Endothelial cell of umbilical vein (primary cell): ENCODE measurements at regions of chr3 and their contacts with region 1.

Region 1: GRCh38 chr3:141959921-141960554 is 83.6 kb downstream of the ATP1B3 start:
- DNase-seq: no peak
- H3K4me3 ChIP-seq: no peak overlapping the region
- H3K27ac ChIP-seq: no peak overlapping the region
- H3K4me1 ChIP-seq: no peaks in the 10 kb centered on the region
- H3K27me3 ChIP-seq: no peaks in the 10 kb centered on the region
- CTCF ChIP-seq: no peak
- POLR2A ChIP-seq: no peak

Region 2: DNA sequence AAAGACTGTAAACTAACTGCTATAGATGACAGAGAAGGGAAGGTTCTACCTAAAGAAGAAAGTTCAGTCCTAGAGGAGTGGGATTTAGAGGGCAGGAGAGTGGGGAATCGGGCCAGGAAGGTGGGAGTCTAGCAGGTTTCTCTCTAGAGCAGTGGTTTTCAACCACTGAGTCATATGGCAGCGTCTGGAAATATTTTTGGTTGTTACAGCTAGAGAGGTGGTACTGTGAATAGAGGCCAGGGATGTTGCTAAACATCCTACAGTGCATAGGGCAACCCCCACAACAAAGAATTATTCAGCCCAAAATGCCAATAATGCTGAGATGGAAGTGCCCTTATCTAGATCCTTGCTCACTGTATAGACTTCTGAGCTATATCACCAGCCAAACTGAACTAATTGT is 54.9 kb before region 1 on chr3:
- CTCF ChIA-PET with region 1: no interaction called
- POLR2A ChIA-PET with region 1: no interaction called
- dilution Hi-C with region 1: no loop called
- intact Hi-C with region 1: no loop called
- DNase-seq: no peak
- H3K4me3 ChIP-seq: no peak overlapping the region
- H3K27ac ChIP-seq: no peak overlapping the region
- H3K4me1 ChIP-seq: no peaks in the 10 kb centered on the region
- H3K27me3 ChIP-seq: no peaks in the 10 kb centered on the region
- CTCF ChIP-seq: no peak
- POLR2A ChIP-seq: no peak

Region 3: GRCh38 chr3:141998669-141999290 is 38.7 kb after region 1 on chr3:
- CTCF ChIA-PET with region 1: interaction called, 4 read pairs
- POLR2A ChIA-PET with region 1: no interaction called
- dilution Hi-C with region 1: no loop called
- intact Hi-C with region 1: loop called (anchors 1 kb)
- DNase-seq: peak; percentile 19
- H3K4me3 ChIP-seq: no peak overlapping the region
- H3K27ac ChIP-seq: no peak overlapping the region
- H3K4me1 ChIP-seq: no peaks in the 10 kb centered on the region
- H3K27me3 ChIP-seq: no peaks in the 10 kb centered on the region
- CTCF ChIP-seq: peak in 1 of 2 donors; percentile 8
- POLR2A ChIP-seq: no peak

Region 4: DNA sequence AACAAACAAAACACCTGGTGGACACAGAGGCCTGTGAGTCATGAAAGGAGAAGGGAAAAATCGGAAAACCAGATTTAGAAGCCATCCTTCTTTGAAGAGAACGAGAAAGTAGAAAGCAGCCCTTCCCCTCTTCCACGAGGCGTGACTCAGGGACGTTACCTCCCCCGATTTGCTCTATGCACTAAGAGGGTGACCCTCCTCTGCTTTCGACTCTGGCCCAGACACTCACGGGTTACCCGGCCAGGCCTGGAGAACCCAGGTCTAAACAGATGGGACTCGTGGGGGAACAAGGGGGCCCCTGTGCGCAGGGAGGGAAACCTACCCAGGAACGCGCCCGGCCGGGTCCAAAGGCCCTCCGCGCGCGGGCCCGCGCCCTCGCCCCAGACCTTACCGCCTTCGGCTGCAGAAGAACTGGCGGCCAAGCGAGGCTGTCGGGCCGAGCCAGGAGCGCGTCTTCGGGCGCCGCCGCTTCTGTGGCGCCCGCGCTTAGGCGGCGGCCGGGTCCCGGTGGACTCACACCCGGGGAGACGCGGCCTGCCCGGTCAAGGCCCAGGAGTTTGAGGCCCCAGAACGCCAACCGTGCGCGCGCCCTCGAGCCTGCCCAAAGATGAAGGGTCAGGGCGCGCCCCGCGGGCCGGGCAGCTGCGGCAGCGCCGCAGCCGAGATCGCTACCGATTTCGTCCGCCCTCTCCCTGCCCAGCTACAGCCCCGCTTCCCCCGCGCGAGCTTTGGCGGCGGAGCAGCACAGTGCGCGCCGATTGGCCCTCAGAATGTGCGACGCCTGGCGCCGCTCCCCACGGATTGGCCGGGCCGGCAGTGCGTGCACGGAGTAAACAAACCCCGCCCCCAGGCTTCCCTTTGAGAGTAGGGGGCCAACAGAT is 189.0 kb after region 1 on chr3 and contains the start of gene TFDP2:
- CTCF ChIA-PET with region 1: no interaction called
- POLR2A ChIA-PET with region 1: no interaction called
- dilution Hi-C with region 1: no loop called
- intact Hi-C with region 1: loop called (anchors 1 kb)
- DNase-seq: peak; percentile 92
- H3K4me3 ChIP-seq: peak within 1 kb of the TSS; percentile 24 to 75 (median 51)
- H3K27ac ChIP-seq: peak within 1 kb of the TSS; percentile 28
- H3K4me1 ChIP-seq: peaks cover 13% of the 10 kb centered on the region
- H3K27me3 ChIP-seq: peaks cover 0 to 3% of the 10 kb centered on the region in 2 experiments
- CTCF ChIP-seq: no peak
- POLR2A ChIP-seq: no peak
- total RNA-seq, gene TFDP2: 21.5 and 23.6 TPM in 2 replicates

Region 5: DNA sequence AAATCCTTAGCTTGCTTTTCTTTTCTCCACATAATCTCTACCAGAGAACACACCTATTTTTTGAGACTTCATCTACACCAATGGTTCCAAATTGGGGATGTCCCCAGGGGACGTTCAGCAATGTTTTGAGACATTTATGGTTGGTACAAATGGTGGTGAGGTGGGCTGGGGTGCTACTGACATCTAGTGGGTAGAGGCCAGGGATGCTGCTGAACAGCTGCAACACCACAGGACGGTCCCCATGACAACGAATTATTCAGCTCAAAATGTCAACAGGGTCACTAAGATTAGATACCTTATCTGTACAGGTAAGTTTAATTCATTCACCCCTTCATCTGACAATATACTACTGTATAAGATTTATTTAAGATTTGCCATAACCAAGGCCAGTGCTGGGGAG is 251.0 kb after region 1 on chr3:
- CTCF ChIA-PET with region 1: interaction called, 3 read pairs
- POLR2A ChIA-PET with region 1: no interaction called
- dilution Hi-C with region 1: no loop called
- intact Hi-C with region 1: loop called (anchors 1 kb)
- DNase-seq: peak; percentile 26
- H3K4me3 ChIP-seq: no peak overlapping the region
- H3K27ac ChIP-seq: no peak overlapping the region
- H3K4me1 ChIP-seq: peaks cover 9% of the 10 kb centered on the region
- H3K27me3 ChIP-seq: no peaks in the 10 kb centered on the region
- CTCF ChIP-seq: peak in 1 of 2 donors; percentile 31
- POLR2A ChIP-seq: no peak

Region 6: DNA sequence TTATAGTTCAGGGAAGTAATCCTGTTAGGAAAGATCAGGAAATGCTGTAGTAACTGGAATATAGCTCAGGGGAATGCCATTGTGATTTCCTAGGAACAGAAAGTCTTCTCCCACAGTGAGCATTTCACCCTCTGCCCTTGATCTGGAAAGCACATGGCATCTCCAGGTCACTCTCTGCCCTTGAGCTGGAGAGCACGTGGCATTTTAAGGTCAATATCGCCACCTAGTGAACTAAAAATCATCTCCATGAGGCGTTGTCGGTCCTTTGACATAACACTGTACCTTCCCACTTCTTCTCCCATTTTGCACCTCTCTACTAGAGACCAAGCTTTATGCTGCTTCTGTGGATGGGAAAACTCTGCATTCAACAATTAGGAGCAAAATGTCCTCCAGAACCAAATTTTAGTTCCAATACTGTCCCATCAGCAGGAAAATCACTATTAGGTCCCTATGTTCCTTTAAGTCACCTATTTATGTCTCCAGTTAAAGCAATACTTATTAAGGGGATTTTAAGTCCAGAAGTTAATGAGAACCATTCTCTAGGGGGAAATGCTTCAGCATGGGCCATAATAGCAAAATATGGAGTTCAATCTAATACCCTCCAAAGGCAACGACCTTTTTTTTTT is 320.0 kb after region 1 on chr3:
- CTCF ChIA-PET with region 1: interaction called, 13 read pairs
- POLR2A ChIA-PET with region 1: no interaction called
- dilution Hi-C with region 1: no loop called
- intact Hi-C with region 1: loop called (anchors 1 kb)
- DNase-seq: peak; percentile 66
- H3K4me3 ChIP-seq: no peak overlapping the region
- H3K27ac ChIP-seq: no peak overlapping the region
- H3K4me1 ChIP-seq: no peaks in the 10 kb centered on the region
- H3K27me3 ChIP-seq: peaks cover 0 to 2% of the 10 kb centered on the region in 2 experiments
- CTCF ChIP-seq: peak; percentile 43 to 49
- POLR2A ChIP-seq: no peak